ENCODE measurements at regions of chr16 and their contacts with region 1.

Region 1: DNA sequence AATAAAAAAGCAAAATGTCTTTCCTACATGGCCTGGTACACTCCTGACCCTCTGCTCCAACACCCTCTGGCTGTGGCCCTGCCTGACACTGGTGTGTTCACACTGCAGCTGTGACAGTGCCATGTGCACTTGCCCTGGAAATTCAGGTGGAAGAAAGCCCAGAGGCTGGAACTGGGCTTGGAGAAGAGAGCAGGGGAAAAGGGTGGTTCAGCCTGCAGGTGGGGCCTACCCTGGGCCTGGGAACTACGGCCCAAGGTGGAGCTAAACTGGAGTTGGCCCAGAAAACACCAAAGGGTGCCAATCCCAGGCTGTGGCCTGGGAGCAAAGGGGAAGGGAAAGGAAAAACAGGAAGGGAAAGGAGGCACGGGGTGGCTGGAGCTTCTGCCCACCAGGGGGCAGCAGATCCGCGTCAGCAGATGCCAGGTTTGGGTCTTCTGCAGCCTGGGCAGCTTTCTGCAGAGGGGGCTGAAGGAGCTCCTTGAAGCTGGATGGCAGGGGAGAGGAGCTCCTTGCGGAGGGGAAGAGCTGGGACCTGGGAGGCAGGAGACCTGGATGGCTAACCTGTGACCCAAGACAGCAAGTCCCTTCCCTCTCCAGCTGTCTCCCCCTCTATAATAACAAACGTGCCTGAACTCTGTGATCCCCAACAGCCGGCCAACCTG is 15.4 kb upstream of the CTCF start:
- DNase-seq: peak; percentile 89
- H3K4me3 ChIP-seq: no peak overlapping the region
- H3K27ac ChIP-seq: peak overlapping the region; percentile 83
- H3K4me1 ChIP-seq: peaks cover 23% of the 10 kb centered on the region
- H3K27me3 ChIP-seq: no peaks in the 10 kb centered on the region
- CTCF ChIP-seq: peak; percentile 93 to 97
- POLR2A ChIP-seq: peak; percentile 50

Region 2: DNA sequence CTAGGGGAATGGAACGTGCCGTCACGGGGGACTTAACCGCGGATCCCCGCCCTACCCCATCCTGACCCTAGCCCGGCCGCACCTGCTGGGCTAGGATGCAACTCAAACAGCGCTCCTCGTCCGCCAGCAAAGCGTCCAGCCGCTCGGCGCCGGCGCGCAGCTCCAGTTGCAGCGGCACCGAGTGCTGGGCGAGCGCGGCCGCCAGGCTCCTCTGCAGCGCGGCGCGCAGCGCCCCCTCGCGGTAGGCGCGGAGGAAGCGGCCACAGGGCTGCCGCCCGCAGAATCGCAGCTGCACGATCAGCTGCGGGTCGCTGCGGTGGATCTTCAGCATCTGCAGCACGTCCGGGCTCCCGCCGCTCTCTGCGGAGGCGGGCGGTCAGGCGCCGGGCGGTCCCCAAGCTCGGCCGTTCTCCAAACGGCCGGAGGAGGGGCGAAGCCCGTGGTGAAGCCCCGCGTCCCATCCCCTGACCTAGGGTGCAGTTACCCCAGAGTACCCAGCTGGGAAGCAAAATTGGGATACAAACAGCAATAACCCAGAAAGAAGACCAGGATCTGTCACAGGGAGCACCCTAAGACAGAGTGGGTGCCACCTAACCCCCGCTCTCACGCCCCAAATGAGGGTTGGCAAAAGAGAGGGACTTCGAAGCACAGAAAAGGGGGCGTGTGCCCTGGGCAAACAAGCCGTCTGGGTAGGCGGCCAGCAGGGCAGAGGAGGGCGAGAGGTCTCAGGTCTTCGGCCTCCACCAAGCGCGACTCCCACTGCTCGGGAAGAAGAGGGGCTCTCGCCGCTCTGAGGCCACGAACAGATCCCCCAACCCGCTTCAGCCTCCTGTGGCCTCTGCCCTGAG is 391.4 kb before region 1 on chr16:
- CTCF ChIA-PET with region 1: no interaction called
- POLR2A ChIA-PET with region 1: no interaction called
- dilution Hi-C with region 1: no loop called
- intact Hi-C with region 1: no loop called
- DNase-seq: peak; percentile 60
- H3K4me3 ChIP-seq: peak overlapping the region in 1 of 3 experiments; percentile 15
- H3K27ac ChIP-seq: no peak overlapping the region
- H3K4me1 ChIP-seq: peaks cover 4% of the 10 kb centered on the region
- H3K27me3 ChIP-seq: peaks cover 2% of the 10 kb centered on the region in 2 experiments
- CTCF ChIP-seq: peak; percentile 89 to 96
- POLR2A ChIP-seq: peak; percentile 24

Region 3: DNA sequence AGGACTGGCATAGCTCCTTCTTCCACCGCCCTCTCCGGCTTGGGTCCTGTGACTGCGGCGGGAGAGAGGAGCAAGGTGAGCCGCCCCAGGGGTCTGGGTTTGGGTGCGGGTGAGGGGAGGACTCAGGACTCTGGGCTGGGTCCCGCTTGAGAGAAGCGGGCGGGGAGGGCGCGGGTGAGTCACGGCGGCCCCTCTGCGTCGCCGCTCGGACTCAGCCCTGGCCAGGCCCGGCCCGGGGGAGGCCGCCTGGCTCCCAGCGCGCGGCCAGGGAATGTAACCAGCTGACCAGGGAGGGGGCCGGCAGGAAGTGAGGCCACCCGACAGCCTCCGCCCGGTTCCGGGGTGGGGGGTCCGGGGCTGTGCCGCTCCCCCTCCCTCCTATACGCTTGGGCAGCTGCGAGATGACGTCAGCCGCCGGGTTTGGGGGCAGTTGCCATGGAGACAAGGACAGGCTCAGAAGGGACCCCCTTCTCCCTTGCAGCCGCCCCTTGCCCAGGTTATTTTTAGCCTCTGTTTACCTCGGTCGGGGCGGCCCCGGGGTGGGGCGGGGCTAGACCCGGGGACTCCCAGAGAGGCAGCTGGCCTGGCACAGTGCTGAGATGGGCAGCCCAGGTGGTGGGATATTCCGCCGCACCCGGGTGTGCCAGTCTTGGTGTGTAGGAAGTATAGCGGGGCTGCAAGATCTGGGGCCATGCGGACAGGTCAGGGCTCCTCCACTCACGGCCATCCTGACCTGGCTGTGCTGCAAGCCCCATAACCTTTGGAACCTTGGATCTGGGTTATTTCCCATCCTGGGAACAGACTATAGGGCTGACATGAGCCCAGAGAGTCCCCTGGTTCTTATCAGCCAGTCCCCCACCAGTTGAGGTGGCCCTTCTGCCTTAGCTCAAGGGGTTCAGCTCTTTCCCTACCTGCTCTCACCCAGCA is 16.6 kb before region 1 on chr16:
- CTCF ChIA-PET with region 1: interaction called, 246 read pairs
- POLR2A ChIA-PET with region 1: no interaction called
- dilution Hi-C with region 1: no loop called
- intact Hi-C with region 1: no loop called
- DNase-seq: peak; percentile 48
- H3K4me3 ChIP-seq: peak overlapping the region; percentile 55 to 85 (median 77)
- H3K27ac ChIP-seq: peak overlapping the region; percentile 76
- H3K4me1 ChIP-seq: peaks cover 15% of the 10 kb centered on the region
- H3K27me3 ChIP-seq: no peaks in the 10 kb centered on the region
- CTCF ChIP-seq: no peak
- POLR2A ChIP-seq: peak; percentile 44

Region 4: GRCh38 chr16:67571981-67572431 is 25.1 kb after region 1 on chr16:
- CTCF ChIA-PET with region 1: interaction called, 27 read pairs
- POLR2A ChIA-PET with region 1: no interaction called
- dilution Hi-C with region 1: no loop called
- intact Hi-C with region 1: no loop called
- DNase-seq: peak; percentile 68
- H3K4me3 ChIP-seq: no peak overlapping the region
- H3K27ac ChIP-seq: peak overlapping the region; percentile 84
- H3K4me1 ChIP-seq: peaks cover 20% of the 10 kb centered on the region
- H3K27me3 ChIP-seq: no peaks in the 10 kb centered on the region
- CTCF ChIP-seq: no peak
- POLR2A ChIP-seq: no peak

Region 5: GRCh38 chr16:67628216-67628615 is 81.3 kb after region 1 on chr16:
- CTCF ChIA-PET with region 1: interaction called, 12 read pairs
- POLR2A ChIA-PET with region 1: no interaction called
- dilution Hi-C with region 1: no loop called
- intact Hi-C with region 1: no loop called
- DNase-seq: no peak
- H3K4me3 ChIP-seq: no peak overlapping the region
- H3K27ac ChIP-seq: no peak overlapping the region
- H3K4me1 ChIP-seq: no peaks in the 10 kb centered on the region
- H3K27me3 ChIP-seq: no peaks in the 10 kb centered on the region
- CTCF ChIP-seq: no peak
- POLR2A ChIP-seq: no peak

Region 6: GRCh38 chr16:67641779-67642708 is 95.2 kb after region 1 on chr16:
- CTCF ChIA-PET with region 1: interaction called, 166 read pairs
- POLR2A ChIA-PET with region 1: interaction called, 3 read pairs
- dilution Hi-C with region 1: no loop called
- intact Hi-C with region 1: loop called (anchors 1 kb)
- DNase-seq: peak; percentile 52
- H3K4me3 ChIP-seq: no peak overlapping the region
- H3K27ac ChIP-seq: no peak overlapping the region
- H3K4me1 ChIP-seq: no peaks in the 10 kb centered on the region
- H3K27me3 ChIP-seq: no peaks in the 10 kb centered on the region
- CTCF ChIP-seq: no peak
- POLR2A ChIP-seq: no peak

Region 7: GRCh38 chr16:67660564-67661028 is 113.7 kb after region 1 on chr16 and contains the start of gene PARD6A:
- CTCF ChIA-PET with region 1: interaction called, 42 read pairs
- POLR2A ChIA-PET with region 1: interaction called, 3 read pairs
- dilution Hi-C with region 1: no loop called
- intact Hi-C with region 1: no loop called
- DNase-seq: peak; percentile 94
- H3K4me3 ChIP-seq: peak within 1 kb of the TSS; percentile 32 to 70 (median 64)
- H3K27ac ChIP-seq: peak within 1 kb of the TSS; percentile 44
- H3K4me1 ChIP-seq: peaks cover 9% of the 10 kb centered on the region
- H3K27me3 ChIP-seq: no peaks in the 10 kb centered on the region
- CTCF ChIP-seq: no peak
- POLR2A ChIP-seq: no peak
- total RNA-seq, gene PARD6A: 1.3 and 1.7 TPM in 2 replicates

Region 8: DNA sequence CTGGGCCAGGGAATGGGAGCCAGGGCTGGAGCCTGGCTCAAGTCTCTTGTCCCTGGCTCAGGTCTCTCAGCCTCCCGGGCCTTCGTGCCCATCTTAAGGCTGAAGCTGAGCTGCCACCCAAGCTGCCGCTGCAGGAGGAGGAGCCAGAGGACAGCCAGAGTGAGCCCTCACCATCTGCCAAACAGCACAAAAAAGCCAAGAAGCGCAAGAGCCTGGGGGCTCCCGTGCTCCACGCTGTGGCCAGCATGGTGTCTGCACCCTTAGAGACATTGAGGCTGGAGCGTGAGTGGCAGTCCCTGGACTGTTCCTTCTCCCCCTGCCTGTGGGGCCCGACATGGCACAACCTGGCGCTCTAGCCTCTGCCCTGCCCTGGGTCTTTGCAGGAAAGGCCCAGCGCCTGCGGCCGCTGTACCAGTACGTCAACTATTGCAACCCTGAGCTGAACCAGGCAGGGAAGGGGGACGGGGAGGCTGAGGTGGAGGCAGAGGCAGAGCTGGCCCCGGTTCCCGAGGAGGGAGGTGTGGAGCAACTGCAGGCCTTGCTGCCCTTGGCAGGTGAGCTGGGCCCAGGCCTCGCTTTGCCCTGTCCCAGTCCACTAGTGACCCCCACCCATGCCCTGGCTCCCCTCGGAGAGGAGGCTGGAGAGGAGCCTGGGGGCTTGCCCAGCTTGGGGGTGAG is 121.1 kb after region 1 on chr16:
- CTCF ChIA-PET with region 1: interaction called, 42 read pairs
- POLR2A ChIA-PET with region 1: interaction called, 3 read pairs
- dilution Hi-C with region 1: no loop called
- intact Hi-C with region 1: loop called (anchors 1 kb)
- DNase-seq: peak; percentile 92
- H3K4me3 ChIP-seq: no peak overlapping the region
- H3K27ac ChIP-seq: no peak overlapping the region
- H3K4me1 ChIP-seq: peaks cover 17% of the 10 kb centered on the region
- H3K27me3 ChIP-seq: no peaks in the 10 kb centered on the region
- CTCF ChIP-seq: peak; percentile 85 to 98
- POLR2A ChIP-seq: no peak

Region 9: DNA sequence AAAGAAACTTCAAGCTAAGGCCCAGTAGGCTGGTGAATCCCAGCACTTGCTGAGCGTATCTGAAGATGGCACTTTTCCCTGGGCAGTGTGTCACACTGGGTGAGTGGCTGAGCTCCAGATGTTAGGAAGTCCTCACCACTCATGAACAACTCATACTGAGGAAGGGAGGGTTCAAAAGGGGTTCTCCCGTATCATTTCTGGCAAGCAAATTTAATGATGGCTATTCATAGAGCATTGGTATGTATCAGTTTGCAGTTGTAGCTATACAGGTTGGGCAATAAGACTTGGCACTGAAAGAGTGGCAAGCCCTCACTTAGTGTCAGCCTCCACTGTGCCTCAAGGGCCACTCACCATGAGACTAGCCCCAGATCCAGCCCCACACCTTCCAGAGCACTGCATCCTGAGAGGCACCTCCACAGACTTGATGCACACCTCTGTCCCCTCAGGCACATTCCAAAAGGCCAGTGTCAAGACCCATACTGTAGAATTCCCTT is 161.5 kb after region 1 on chr16:
- CTCF ChIA-PET with region 1: no interaction called
- POLR2A ChIA-PET with region 1: no interaction called
- dilution Hi-C with region 1: no loop called
- intact Hi-C with region 1: no loop called
- DNase-seq: no peak
- H3K4me3 ChIP-seq: no peak overlapping the region
- H3K27ac ChIP-seq: no peak overlapping the region
- H3K4me1 ChIP-seq: no peaks in the 10 kb centered on the region
- H3K27me3 ChIP-seq: no peaks in the 10 kb centered on the region
- CTCF ChIP-seq: no peak
- POLR2A ChIP-seq: no peak

Measured in endothelial cell of umbilical vein (primary cell).